ENCODE measurements at regions of chr2 and their contacts with region 1.

Region 1: GRCh38 chr2:151238527-151239487 is 22.9 kb downstream of the RBM43 start:
- DNase-seq: peak; percentile 80
- H3K4me3 ChIP-seq: no peak overlapping the region
- H3K27ac ChIP-seq: no peak overlapping the region
- H3K4me1 ChIP-seq: peaks cover 7% of the 10 kb centered on the region
- H3K27me3 ChIP-seq: no peaks in the 10 kb centered on the region
- CTCF ChIP-seq: peak; percentile 53 to 57
- POLR2A ChIP-seq: no peak

Region 2: GRCh38 chr2:149573760-149574159 is 1665.0 kb before region 1 on chr2:
- CTCF ChIA-PET with region 1: interaction called, 50 read pairs
- POLR2A ChIA-PET with region 1: no interaction called
- dilution Hi-C with region 1: no loop called
- intact Hi-C with region 1: loop called (anchors 10 kb)
- DNase-seq: peak; percentile 13
- H3K4me3 ChIP-seq: no peak overlapping the region
- H3K27ac ChIP-seq: no peak overlapping the region
- H3K4me1 ChIP-seq: no peaks in the 10 kb centered on the region
- H3K27me3 ChIP-seq: no peaks in the 10 kb centered on the region
- CTCF ChIP-seq: peak in 1 of 2 donors; percentile 4
- POLR2A ChIP-seq: no peak

Region 3: GRCh38 chr2:149648282-149649030 is 1590.4 kb before region 1 on chr2:
- CTCF ChIA-PET with region 1: interaction called, 20 read pairs
- POLR2A ChIA-PET with region 1: no interaction called
- dilution Hi-C with region 1: no loop called
- intact Hi-C with region 1: no loop called
- DNase-seq: peak; percentile 91
- H3K4me3 ChIP-seq: no peak overlapping the region
- H3K27ac ChIP-seq: peak overlapping the region; percentile 70
- H3K4me1 ChIP-seq: peaks cover 23% of the 10 kb centered on the region
- H3K27me3 ChIP-seq: no peaks in the 10 kb centered on the region
- CTCF ChIP-seq: no peak
- POLR2A ChIP-seq: no peak

Region 4: GRCh38 chr2:150478200-150478974 is 760.4 kb before region 1 on chr2:
- CTCF ChIA-PET with region 1: interaction called, 11 read pairs
- POLR2A ChIA-PET with region 1: no interaction called
- dilution Hi-C with region 1: no loop called
- intact Hi-C with region 1: no loop called
- DNase-seq: peak; percentile 37
- H3K4me3 ChIP-seq: peak overlapping the region in 2 of 3 experiments; percentile 6 to 46
- H3K27ac ChIP-seq: peak overlapping the region; percentile 83
- H3K4me1 ChIP-seq: peaks cover 97% of the 10 kb centered on the region
- H3K27me3 ChIP-seq: no peaks in the 10 kb centered on the region
- CTCF ChIP-seq: no peak
- POLR2A ChIP-seq: peak; percentile 68

Region 5: DNA sequence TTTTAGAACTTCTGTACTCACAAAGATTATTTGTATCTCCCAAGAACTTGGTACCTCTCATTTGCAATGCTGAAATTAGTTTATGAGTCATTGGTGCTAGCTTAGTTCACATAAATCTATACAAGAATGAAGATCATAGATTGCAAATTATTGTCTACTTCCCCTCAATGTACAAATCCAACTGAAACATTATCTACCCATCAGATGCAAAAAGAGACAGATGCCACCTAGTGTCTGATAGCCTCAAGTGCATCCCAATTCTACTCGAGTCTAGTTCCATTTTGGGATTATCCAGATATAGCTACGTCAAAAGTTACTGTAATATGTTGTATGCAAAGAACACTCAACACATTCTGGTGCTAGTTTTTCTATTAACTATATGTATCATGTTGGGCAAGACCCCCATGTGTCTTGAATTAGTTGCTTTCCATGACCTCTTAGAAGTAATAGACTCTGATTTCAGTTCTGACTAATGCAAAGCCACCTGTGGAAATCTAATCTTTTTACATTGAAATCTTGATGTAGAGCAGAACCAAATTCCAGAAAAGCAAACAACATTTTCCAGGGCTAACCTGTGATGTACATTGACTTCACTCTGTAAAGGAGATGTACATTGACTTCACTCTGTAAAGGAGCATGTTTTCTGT is 187.1 kb before region 1 on chr2:
- CTCF ChIA-PET with region 1: interaction called, 18 read pairs
- POLR2A ChIA-PET with region 1: no interaction called
- dilution Hi-C with region 1: no loop called
- intact Hi-C with region 1: loop called (anchors 2 kb)
- DNase-seq: peak; percentile 69
- H3K4me3 ChIP-seq: no peak overlapping the region
- H3K27ac ChIP-seq: no peak overlapping the region
- H3K4me1 ChIP-seq: no peaks in the 10 kb centered on the region
- H3K27me3 ChIP-seq: no peaks in the 10 kb centered on the region
- CTCF ChIP-seq: peak; percentile 62 to 73
- POLR2A ChIP-seq: no peak

Region 6: DNA sequence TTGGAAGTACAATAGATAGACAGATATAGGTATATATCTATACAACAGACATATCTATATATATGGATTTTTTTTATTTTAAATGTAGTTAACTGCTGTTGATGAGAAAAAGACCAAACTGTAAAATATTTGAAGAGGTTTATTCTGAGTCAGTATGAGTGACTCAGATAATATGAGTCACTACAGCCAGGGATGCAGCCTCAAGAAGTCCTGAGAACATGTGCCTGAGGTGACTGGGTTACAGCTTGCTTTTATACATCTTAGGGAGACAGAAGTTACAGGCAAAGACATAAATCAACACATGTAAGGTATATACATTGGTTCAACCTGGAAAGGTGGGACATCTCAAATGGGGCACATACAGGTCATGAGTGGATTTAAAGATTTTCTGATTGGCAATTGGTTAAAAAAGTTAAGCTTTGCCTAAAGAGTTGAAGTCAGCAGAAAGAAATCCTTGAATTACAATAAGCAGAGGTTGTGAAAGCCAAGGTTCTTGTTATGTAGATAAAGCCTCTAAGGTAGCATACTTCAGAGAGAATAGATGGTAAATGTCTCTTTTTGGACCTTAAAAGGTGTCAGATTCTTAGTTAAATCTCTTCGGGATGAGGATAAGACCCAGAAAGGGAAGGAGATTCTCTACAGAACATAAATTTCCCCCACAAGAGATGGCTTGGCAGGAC is 127.1 kb before region 1 on chr2:
- CTCF ChIA-PET with region 1: no interaction called
- POLR2A ChIA-PET with region 1: no interaction called
- dilution Hi-C with region 1: no loop called
- intact Hi-C with region 1: no loop called
- DNase-seq: no peak
- H3K4me3 ChIP-seq: no peak overlapping the region
- H3K27ac ChIP-seq: no peak overlapping the region
- H3K4me1 ChIP-seq: no peaks in the 10 kb centered on the region
- H3K27me3 ChIP-seq: no peaks in the 10 kb centered on the region
- CTCF ChIP-seq: no peak
- POLR2A ChIP-seq: no peak

Region 7: GRCh38 chr2:152025678-152026287 is 787.0 kb after region 1 on chr2:
- CTCF ChIA-PET with region 1: no interaction called
- POLR2A ChIA-PET with region 1: no interaction called
- dilution Hi-C with region 1: no loop called
- intact Hi-C with region 1: loop called (anchors 5 kb)
- DNase-seq: peak; percentile 86
- H3K4me3 ChIP-seq: peak overlapping the region; percentile 8 to 64 (median 12)
- H3K27ac ChIP-seq: no peak overlapping the region
- H3K4me1 ChIP-seq: peaks cover 4% of the 10 kb centered on the region
- H3K27me3 ChIP-seq: peaks cover 2 to 17% of the 10 kb centered on the region in 2 experiments
- CTCF ChIP-seq: peak; percentile 97 to 98
- POLR2A ChIP-seq: no peak